ENCODE measurements at regions of chr12 and their contacts with region 1.

Region 1: GRCh38 chr12:104790296-104791125 is 167.6 kb downstream of the SLC41A2 start:
- DNase-seq: peak; percentile 59
- H3K4me3 Mint-ChIP-seq: no peak overlapping the region
- H3K27ac Mint-ChIP-seq: no peak overlapping the region
- H3K4me1 Mint-ChIP-seq: peaks cover 2% of the 10 kb centered on the region
- H3K27me3 Mint-ChIP-seq: peaks cover 3% of the 10 kb centered on the region

Region 2: GRCh38 chr12:104720339-104721038 is 70.0 kb before region 1 on chr12:
- CTCF ChIA-PET with region 1: no interaction called
- POLR2A ChIA-PET with region 1: no interaction called
- intact Hi-C with region 1: no loop called
- DNase-seq: peak; percentile 78
- H3K4me3 Mint-ChIP-seq: peak overlapping the region; percentile 74
- H3K27ac Mint-ChIP-seq: peak overlapping the region; percentile 89
- H3K4me1 Mint-ChIP-seq: peaks cover 39% of the 10 kb centered on the region
- H3K27me3 Mint-ChIP-seq: no peaks in the 10 kb centered on the region

Region 3: DNA sequence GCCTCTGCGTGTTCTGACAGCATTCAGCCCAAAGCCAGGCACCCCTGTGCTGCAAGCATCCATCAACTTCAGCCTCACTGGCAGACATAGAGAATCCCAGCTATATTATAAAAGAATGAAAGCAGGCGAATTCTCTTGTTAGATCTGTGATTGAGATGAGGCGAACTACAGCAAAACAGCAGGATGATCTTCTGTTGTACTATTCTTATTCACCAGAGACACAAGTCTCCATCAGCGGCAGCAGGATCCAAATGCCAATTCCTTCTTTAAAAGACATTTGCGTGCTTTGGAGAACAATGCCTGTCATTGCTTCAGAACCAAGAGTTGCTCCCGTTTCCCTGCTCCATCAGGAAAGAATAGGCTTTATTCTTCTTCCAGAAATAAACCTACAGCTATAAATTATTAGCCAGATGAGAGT is 21.4 kb before region 1 on chr12:
- CTCF ChIA-PET with region 1: interaction called, 12 read pairs
- POLR2A ChIA-PET with region 1: no interaction called
- intact Hi-C with region 1: no loop called
- DNase-seq: no peak
- H3K4me3 Mint-ChIP-seq: no peak overlapping the region
- H3K27ac Mint-ChIP-seq: no peak overlapping the region
- H3K4me1 Mint-ChIP-seq: peaks cover 13% of the 10 kb centered on the region
- H3K27me3 Mint-ChIP-seq: no peaks in the 10 kb centered on the region